Dorsolateral prefrontal cortex (tissue), 120 donors: ENCODE measurements at regions of chr21 and their contacts with region 1.

Region 1: DNA sequence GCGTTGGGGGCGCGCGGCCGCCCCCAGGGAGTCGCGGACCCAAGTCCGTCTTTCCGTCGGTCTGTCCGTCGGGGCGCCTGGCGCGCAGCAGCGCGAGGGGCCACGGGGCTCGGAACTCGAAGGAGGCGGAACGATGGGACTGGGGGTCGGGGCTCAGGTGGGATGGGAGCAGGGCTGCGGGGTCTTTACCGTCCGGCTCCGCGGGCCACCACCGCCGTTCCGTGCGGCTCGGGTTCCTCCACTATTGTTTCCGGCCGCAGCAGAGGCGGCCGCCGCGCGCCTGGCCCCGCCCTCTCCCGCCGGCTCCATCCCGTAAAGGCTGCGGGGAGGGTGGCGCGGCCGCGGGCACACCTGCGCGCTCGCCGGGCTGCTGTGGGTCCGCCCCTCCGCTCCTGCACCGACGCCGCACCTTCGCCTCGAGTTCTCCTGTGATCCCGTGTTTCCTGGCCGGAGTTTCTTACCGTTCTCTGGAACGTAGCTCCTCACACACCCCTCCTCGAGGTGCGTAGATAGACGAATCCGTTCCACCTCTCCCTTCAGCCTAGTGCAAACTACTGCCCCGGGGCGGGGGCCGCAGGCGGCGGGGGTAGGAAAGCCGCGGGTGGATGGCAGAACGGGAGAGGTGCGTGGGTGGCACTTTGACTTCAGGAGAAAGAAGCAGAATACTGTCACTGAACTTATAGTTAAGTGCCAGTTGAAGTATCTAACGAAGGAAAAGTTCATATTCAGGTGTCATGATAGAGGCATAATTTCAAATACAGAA is at the start of gene C21orf91:
- DNase-seq: peak; percentile 63 to 93 (median 90)
- H3K4me3 ChIP-seq: peak within 1 kb of the TSS; percentile 59 to 97 (median 86)
- H3K27ac ChIP-seq: peak within 1 kb of the TSS; percentile 80 to 99 (median 96)
- H3K27me3 ChIP-seq: peaks cover 0 to 10% (median 0%) of the 10 kb centered on the region in 45 donors
- CTCF ChIP-seq: peak in 4 of 56 donors; percentile 5 to 20 (median 7)
- total RNA-seq, gene C21orf91: 7.1 to 113 (median 28.7) TPM

Region 2: DNA sequence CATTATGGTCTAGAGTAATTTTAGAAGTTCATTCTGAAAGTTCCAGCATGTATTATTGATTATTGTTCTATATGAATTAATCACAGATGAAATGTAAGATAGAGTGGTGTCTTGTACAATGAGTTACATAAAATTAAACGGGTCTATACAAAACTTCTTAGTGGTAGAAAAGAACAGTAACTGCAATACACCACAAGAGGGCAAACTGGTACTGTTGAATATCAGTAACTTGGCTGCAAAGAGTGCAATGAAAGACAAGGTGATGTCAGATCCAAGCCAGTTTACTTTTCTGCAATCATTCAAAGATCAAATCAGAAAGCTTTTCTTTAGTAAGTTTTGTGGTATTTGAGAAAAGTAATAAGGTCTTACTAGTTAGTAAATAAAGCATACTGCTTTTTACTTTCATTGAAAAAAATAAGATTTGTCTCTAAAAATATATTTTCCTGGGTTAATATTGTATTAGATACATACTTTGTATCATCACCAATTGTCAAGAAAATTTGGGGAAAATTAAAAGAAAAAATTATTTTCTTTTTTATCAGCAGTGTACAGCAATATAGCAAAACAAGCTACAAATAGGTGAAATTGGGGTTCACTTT is 140.2 kb before region 1 on chr21:
- intact Hi-C with region 1: loop called in 1 of 2 experiments (anchors 10 kb)
- DNase-seq: no peak
- H3K4me3 ChIP-seq: no peak overlapping the region
- H3K27ac ChIP-seq: no peak overlapping the region
- H3K27me3 ChIP-seq: no peaks in the 10 kb centered on the region
- CTCF ChIP-seq: peak; percentile 73 to 96 (median 90)

Region 3: GRCh38 chr21:17853393-17854275 is 34.3 kb after region 1 on chr21:
- intact Hi-C with region 1: loop called (anchors 2 to 5 kb)
- DNase-seq: peak in 2 of 10 donors; percentile 16 to 34
- H3K4me3 ChIP-seq: peak overlapping the region in 6 of 59 donors; percentile 2 to 24 (median 8)
- H3K27ac ChIP-seq: peak overlapping the region in 29 of 59 donors; percentile 2 to 74 (median 51)
- H3K27me3 ChIP-seq: no peaks in the 10 kb centered on the region
- CTCF ChIP-seq: no peak

Region 4: DNA sequence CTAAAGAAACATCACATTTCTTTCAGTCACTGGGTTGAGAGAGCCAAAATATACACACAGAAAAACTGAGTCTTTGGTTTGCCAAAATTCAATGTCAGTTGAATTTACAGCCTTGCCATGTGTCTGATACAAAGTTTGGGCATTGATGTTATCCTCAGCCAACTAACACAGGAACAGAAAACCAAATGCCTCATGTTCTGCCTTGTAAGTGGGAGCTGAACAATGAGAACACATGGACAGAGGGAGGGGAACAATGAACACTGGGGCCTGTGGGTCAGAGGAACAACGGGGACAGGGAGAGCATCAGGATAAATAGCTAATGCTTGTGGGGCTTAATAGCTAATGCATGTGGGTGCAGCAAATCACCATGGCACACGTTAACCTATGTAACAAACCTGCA is 39.5 kb after region 1 on chr21:
- intact Hi-C with region 1: loop called (anchors 2 to 5 kb)
- DNase-seq: peak in 7 of 10 donors; percentile 24 to 77 (median 50)
- H3K4me3 ChIP-seq: peak overlapping the region in 2 of 59 donors; percentile 9 to 27
- H3K27ac ChIP-seq: peak overlapping the region; percentile 45 to 99 (median 94)
- H3K27me3 ChIP-seq: no peaks in the 10 kb centered on the region
- CTCF ChIP-seq: no peak

Region 5: DNA sequence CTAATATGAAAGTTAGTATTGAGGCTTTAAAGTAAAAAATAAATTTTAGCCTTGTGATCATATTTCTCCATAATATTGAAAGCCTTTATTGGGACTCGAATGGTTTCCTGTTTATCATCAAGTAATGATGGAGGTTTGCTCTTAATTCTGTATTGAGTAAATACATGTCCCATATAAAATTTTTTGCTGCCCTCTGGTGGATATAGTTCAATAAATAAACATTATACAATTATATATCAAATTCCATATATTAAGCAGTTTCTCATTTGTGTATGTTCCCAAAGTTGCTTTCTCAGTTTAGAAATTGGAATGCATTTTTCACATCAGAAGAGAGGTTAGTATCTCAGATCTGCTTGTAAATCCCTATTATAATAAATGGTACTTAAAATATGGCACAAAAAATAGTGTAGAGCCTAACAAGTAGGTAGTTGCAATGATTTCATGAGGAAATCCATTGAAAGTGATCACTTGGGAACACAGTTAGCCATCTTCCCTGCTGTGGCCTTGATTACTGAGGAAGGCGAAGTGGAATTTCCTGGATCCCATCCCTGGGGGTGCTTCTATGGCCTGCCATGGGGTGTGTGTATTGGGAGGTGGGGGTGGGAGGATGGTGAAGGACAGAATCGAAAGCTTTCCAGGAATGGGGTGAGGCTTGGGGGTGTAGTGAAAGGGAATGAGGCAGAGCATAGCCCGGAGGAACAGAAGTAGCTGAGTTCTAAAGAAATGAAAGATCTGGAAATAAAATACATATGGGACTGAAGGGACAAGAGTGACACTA is 83.9 kb after region 1 on chr21:
- intact Hi-C with region 1: loop called (anchors 2 to 10 kb)
- DNase-seq: no peak
- H3K4me3 ChIP-seq: peak overlapping the region in 4 of 59 donors; percentile 1 to 14 (median 5)
- H3K27ac ChIP-seq: peak overlapping the region in 48 of 59 donors; percentile 13 to 87 (median 67)
- H3K27me3 ChIP-seq: no peaks in the 10 kb centered on the region
- CTCF ChIP-seq: peak; percentile 27 to 79 (median 59)